Colonic mucosa (tissue), 4 donors: ENCODE measurements at regions of chr10 and their contacts with region 1.

Region 1: DNA sequence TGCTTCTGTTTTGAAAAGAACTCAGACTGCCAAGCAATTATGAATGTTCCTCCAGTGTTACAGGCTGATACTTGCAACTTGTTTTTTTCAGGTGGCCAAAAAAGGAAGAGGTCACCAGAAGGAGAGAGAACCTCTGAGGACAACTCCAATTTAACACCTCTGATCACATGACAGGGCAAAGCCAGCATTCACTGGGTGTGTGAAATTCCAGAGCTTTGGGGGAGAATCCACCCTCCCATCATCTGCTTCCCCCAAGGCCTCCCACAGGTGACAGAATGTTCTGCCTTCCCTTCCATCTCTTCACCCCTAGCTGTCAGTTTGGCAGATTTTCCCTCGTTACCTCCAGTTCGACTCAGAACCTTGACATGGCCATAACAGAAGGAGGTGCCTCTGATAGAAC is 39.1 kb downstream of the GOT1 start:
- DNase-seq: no peak
- H3K4me3 ChIP-seq: no peak overlapping the region
- H3K27ac ChIP-seq: no peak overlapping the region
- H3K4me1 ChIP-seq: no peaks in the 10 kb centered on the region
- H3K27me3 ChIP-seq: no peaks in the 10 kb centered on the region
- CTCF ChIP-seq: no peak

Region 2: GRCh38 chr10:99551158-99551557 is 159.8 kb after region 1 on chr10:
- intact Hi-C with region 1: loop called (anchors 5 kb)
- DNase-seq: peak; percentile 57
- H3K4me3 ChIP-seq: no peak overlapping the region
- H3K27ac ChIP-seq: no peak overlapping the region
- H3K4me1 ChIP-seq: no peaks in the 10 kb centered on the region
- H3K27me3 ChIP-seq: no peaks in the 10 kb centered on the region
- CTCF ChIP-seq: no peak